ENCODE measurements at regions of chr14 and their contacts with region 1.

Region 1: DNA sequence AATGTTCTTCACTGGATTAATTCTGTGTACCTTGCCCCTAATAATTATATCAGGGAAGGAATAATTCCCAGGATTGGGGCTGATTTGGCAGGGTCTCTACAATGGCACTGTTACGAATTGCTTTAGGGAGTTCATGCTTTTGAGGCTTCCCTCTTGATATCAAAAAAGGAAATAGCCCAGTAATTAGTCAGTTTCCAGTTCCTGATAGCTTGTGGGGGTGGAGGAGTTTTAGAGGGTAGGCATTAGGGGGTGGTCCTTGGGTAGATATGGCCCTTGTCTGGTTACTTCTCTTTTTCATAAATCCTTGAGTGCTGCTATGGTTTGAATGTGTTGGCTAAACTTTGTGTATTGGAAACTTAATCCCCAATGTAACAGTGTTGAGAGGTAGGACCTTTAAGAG is 6.1 kb upstream of the SRSF5 start:
- DNase-seq: no peak
- ATAC-seq: no peak
- H3K4me3 ChIP-seq: no peak overlapping the region
- H3K27ac ChIP-seq: no peak overlapping the region
- H3K4me1 ChIP-seq: peaks cover 13% of the 10 kb centered on the region
- H3K27me3 ChIP-seq: no peaks in the 10 kb centered on the region; a peak in 1 of 5 replicates
- CTCF ChIP-seq: no peak
- EP300 ChIP-seq: no peak
- POLR2A ChIP-seq: no peak
- RAD21 ChIP-seq: no peak

Region 2: GRCh38 chr14:69749956-69750355 is 10.9 kb before region 1 on chr14:
- CTCF ChIA-PET with region 1: no interaction called
- POLR2A ChIA-PET with region 1: interaction called, 15 read pairs
- in situ Hi-C with region 1: no loop called
- intact Hi-C with region 1: no loop called
- DNase-seq: peak; percentile 76
- ATAC-seq: peak; percentile 94
- H3K4me3 ChIP-seq: peak overlapping the region in 1 of 3 experiments; percentile 44; a peak in 2 of 6 replicates
- H3K27ac ChIP-seq: peak overlapping the region; percentile 22
- H3K4me1 ChIP-seq: peaks cover 82% of the 10 kb centered on the region
- H3K27me3 ChIP-seq: no peaks in the 10 kb centered on the region
- CTCF ChIP-seq: no peak
- EP300 ChIP-seq: no peak
- POLR2A ChIP-seq: no peak
- RAD21 ChIP-seq: no peak

Region 3: GRCh38 chr14:70330596-70330995 is 569.8 kb after region 1 on chr14:
- CTCF ChIA-PET with region 1: no interaction called
- POLR2A ChIA-PET with region 1: no interaction called
- in situ Hi-C with region 1: no loop called
- intact Hi-C with region 1: no loop called
- DNase-seq: no peak
- ATAC-seq: no peak
- H3K4me3 ChIP-seq: no peak overlapping the region
- H3K27ac ChIP-seq: no peak overlapping the region
- H3K4me1 ChIP-seq: 0 out of 2 replicates have a peak, but pooled peaks cover 5% of the 10 kb centered on the region
- H3K27me3 ChIP-seq: no peaks in the 10 kb centered on the region
- CTCF ChIP-seq: no peak
- EP300 ChIP-seq: no peak
- POLR2A ChIP-seq: no peak
- RAD21 ChIP-seq: no peak

Measured in HepG2 (cell line).